Dorsolateral prefrontal cortex (tissue), 120 donors: ENCODE measurements at regions of chr13 and their contacts with region 1.

Region 1: GRCh38 chr13:112606109-112607001 is 18.4 kb upstream of the TUBGCP3 start:
- DNase-seq: peak; percentile 84 to 94 (median 89)
- H3K4me3 ChIP-seq: peak overlapping the region; percentile 35 to 77 (median 60)
- H3K27ac ChIP-seq: peak overlapping the region in 36 of 59 donors; percentile 2 to 80 (median 44)
- H3K27me3 ChIP-seq: no peaks in the 10 kb centered on the region
- CTCF ChIP-seq: peak; percentile 80 to 99 (median 96)

Region 2: DNA sequence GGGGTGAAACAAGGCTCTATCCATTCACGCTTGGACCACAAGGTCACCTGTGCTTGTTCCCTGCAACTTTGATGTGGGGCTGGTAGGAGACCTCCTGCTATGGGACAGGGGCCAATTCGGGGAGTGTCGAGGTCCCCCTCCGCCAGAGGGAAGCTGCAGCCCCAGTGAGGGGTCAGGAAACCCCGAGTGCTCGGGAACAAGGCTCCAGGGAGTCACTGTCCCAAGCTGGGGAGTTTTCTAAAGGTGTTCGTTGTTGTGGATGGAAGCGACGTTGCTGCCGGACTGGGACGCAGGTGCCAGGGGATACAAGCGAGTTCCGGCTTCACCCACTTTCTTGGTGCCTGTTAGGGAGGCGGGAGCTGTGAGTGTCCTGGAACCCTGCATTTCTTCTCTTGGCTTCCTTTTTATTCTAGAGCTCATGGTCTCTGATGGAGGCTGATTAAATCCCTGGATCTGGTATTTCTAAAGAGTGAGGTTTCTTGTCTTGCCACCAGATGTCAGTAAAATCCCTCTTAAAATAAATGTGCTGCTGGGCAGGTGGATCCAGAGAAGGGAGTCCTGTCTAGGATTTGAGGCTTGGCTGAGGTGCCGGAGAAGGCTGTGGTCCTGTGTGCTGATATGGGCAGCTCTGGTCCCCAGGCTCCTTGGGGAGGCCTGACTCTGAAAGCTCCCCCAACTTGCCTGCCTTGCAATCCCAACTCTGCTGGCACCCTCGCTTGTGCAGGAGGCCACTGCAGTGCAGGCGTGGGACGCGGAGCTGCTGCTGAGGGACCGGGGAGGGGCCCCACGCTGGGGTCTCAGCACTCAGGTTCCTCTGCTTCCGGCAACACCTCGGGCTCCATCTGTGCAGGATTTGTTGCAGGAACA is 1132.0 kb before region 1 on chr13:
- intact Hi-C with region 1: loop called in 1 of 2 experiments (anchors 10 kb)
- DNase-seq: peak in 3 of 10 donors; percentile 21 to 34 (median 23)
- H3K4me3 ChIP-seq: no peak overlapping the region
- H3K27ac ChIP-seq: no peak overlapping the region
- H3K27me3 ChIP-seq: peaks cover 0 to 14% (median 0%) of the 10 kb centered on the region in 45 donors
- CTCF ChIP-seq: peak; percentile 39 to 84 (median 68)

Region 3: DNA sequence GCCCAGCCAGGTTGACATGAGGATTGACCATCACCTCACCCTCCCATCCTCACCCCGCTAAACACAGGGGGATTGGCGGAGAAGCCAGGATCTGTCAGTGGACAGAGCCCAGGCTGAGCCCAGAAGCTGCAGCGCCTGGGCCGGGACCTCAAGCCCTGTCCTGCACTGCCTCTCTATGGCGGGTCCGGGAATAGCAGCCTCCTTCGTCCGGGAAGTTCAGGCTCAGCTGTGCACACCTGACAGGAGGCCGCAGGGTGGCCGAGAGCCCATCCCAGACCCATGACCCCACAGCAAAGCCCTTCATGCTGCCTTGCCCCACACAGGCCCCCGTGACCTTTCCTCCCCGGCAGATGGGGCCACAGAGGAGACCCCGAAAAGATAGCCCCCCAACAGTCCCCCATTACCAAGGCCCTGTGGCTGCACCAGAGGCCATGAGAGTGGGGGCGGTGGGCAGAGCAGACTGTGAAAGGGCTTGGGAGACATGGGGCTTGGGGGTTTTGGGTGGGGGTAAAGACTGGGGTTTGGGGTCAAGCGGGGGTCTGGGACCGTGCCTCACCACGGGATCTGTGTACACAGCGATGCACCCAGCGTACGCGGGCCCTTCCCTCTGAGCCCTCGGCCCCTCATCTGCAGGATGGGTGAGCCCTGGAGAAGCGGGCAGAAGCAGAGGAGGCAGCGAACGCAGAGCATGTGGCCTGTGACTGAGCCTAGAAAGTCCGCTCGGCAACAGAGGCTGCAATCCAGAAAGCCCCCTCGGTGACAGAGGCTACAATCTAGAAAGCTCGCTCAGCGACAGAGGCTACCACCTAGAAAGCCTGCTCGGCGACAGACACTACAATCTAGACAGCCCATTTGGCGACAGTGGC is 162.1 kb before region 1 on chr13:
- intact Hi-C with region 1: loop called in 1 of 2 experiments (anchors 2 kb)
- DNase-seq: peak in 9 of 10 donors; percentile 25 to 82 (median 68)
- H3K4me3 ChIP-seq: no peak overlapping the region
- H3K27ac ChIP-seq: no peak overlapping the region
- H3K27me3 ChIP-seq: peaks cover 0 to 54% (median 19%) of the 10 kb centered on the region in 45 donors
- CTCF ChIP-seq: peak; percentile 63 to 94 (median 85)

Region 4: GRCh38 chr13:112587764-112588489 is 18.4 kb before region 1 on chr13 and contains the start of gene TUBGCP3:
- intact Hi-C with region 1: loop called in 1 of 2 experiments (anchors 1 kb)
- DNase-seq: peak; percentile 66 to 91 (median 80)
- H3K4me3 ChIP-seq: peak within 1 kb of the TSS; percentile 68 to 100 (median 94)
- H3K27ac ChIP-seq: peak within 1 kb of the TSS; percentile 52 to 97 (median 91)
- H3K27me3 ChIP-seq: no peaks in the 10 kb centered on the region
- CTCF ChIP-seq: peak in 53 of 56 donors; percentile 1 to 59 (median 45)
- total RNA-seq, gene TUBGCP3: 29.5 to 60.5 (median 44.0) TPM